Gastrocnemius medialis (tissue), 4 donors: ENCODE measurements at regions of chr9 and their contacts with region 1.

Region 1: DNA sequence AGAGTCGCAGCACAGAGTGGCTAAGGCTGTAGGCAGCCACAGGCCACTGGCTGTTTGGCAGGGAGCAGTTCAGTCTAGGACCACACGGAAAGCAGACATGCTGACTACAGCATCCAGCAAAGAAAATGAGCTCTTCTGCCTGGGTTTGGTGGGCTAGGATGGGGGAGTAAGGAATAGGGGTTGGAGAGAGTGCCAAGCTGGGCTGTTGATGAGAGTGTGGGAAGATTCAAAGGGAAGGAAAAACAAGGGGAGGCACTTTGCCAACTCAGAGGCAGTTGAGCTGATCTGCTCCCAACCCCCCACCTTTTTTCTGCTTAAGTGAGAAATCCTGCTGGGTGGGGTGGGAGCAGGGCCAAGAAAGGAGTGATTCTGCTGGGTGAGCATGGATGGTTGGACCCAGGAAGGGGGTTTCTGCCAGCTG is 35.9 kb downstream of the SVEP1 start:
- DNase-seq: no peak
- ATAC-seq: no peak
- H3K4me3 ChIP-seq: no peak overlapping the region
- H3K27ac ChIP-seq: peak overlapping the region in 3 of 4 donors; percentile 6 to 20 (median 12)
- H3K4me1 ChIP-seq: peaks cover 0 to 5% of the 10 kb centered on the region in 2 donors
- H3K27me3 ChIP-seq: no peaks in the 10 kb centered on the region
- CTCF ChIP-seq: no peak
- POLR2A ChIP-seq: no peak

Region 2: GRCh38 chr9:110486218-110486617 is 57.4 kb before region 1 on chr9:
- in situ Hi-C with region 1: loop called in 1 of 4 experiments (anchors 10 kb)
- intact Hi-C with region 1: no loop called
- DNase-seq: no peak
- ATAC-seq: no peak
- H3K4me3 ChIP-seq: no peak overlapping the region
- H3K27ac ChIP-seq: no peak overlapping the region
- H3K4me1 ChIP-seq: no peaks in the 10 kb centered on the region
- H3K27me3 ChIP-seq: no peaks in the 10 kb centered on the region
- CTCF ChIP-seq: no peak
- POLR2A ChIP-seq: no peak